Calu3 (cell line): ENCODE measurements at regions of chr6 and their contacts with region 1.

Region 1: GRCh38 chr6:24855395-24856245 is 56.9 kb upstream of the ARMH2 start:
- DNase-seq: peak; percentile 81
- H3K4me3 Mint-ChIP-seq: no peak overlapping the region
- H3K27ac Mint-ChIP-seq: no peak overlapping the region
- H3K4me1 Mint-ChIP-seq: peaks cover 29% of the 10 kb centered on the region
- H3K27me3 Mint-ChIP-seq: no peaks in the 10 kb centered on the region
- CTCF ChIP-seq: peak; percentile 94

Region 2: GRCh38 chr6:24583455-24584381 is 271.9 kb before region 1 on chr6:
- CTCF ChIA-PET with region 1: no interaction called
- intact Hi-C with region 1: no loop called
- DNase-seq: peak; percentile 91
- H3K4me3 Mint-ChIP-seq: peak overlapping the region; percentile 48
- H3K27ac Mint-ChIP-seq: peak overlapping the region; percentile 35
- H3K4me1 Mint-ChIP-seq: peaks cover 40% of the 10 kb centered on the region
- H3K27me3 Mint-ChIP-seq: no peaks in the 10 kb centered on the region
- CTCF ChIP-seq: peak; percentile 96

Region 3: GRCh38 chr6:24933868-24934401 is 78.3 kb after region 1 on chr6:
- CTCF ChIA-PET with region 1: no interaction called
- intact Hi-C with region 1: loop called (anchors 5 kb)
- DNase-seq: peak; percentile 36
- H3K4me3 Mint-ChIP-seq: no peak overlapping the region
- H3K27ac Mint-ChIP-seq: no peak overlapping the region
- H3K4me1 Mint-ChIP-seq: peaks cover 9% of the 10 kb centered on the region
- H3K27me3 Mint-ChIP-seq: peaks cover 13% of the 10 kb centered on the region
- CTCF ChIP-seq: peak; percentile 78

Region 4: GRCh38 chr6:25070547-25071366 is 215.1 kb after region 1 on chr6:
- CTCF ChIA-PET with region 1: interaction called, 26 read pairs
- intact Hi-C with region 1: loop called (anchors 1 kb)
- DNase-seq: peak; percentile 94
- H3K4me3 Mint-ChIP-seq: no peak overlapping the region
- H3K27ac Mint-ChIP-seq: no peak overlapping the region
- H3K4me1 Mint-ChIP-seq: no peaks in the 10 kb centered on the region
- H3K27me3 Mint-ChIP-seq: peaks cover 27% of the 10 kb centered on the region
- CTCF ChIP-seq: peak; percentile 100